ENCODE measurements at regions of chr14 and their contacts with region 1.

Region 1: GRCh38 chr14:100263144-100263543 is 24.2 kb downstream of the YY1 start:
- DNase-seq: no peak
- H3K4me3 Mint-ChIP-seq: no peak overlapping the region
- H3K27ac Mint-ChIP-seq: peak overlapping the region; percentile 51
- H3K4me1 Mint-ChIP-seq: peaks cover 80% of the 10 kb centered on the region
- H3K27me3 Mint-ChIP-seq: no peaks in the 10 kb centered on the region

Region 2: DNA sequence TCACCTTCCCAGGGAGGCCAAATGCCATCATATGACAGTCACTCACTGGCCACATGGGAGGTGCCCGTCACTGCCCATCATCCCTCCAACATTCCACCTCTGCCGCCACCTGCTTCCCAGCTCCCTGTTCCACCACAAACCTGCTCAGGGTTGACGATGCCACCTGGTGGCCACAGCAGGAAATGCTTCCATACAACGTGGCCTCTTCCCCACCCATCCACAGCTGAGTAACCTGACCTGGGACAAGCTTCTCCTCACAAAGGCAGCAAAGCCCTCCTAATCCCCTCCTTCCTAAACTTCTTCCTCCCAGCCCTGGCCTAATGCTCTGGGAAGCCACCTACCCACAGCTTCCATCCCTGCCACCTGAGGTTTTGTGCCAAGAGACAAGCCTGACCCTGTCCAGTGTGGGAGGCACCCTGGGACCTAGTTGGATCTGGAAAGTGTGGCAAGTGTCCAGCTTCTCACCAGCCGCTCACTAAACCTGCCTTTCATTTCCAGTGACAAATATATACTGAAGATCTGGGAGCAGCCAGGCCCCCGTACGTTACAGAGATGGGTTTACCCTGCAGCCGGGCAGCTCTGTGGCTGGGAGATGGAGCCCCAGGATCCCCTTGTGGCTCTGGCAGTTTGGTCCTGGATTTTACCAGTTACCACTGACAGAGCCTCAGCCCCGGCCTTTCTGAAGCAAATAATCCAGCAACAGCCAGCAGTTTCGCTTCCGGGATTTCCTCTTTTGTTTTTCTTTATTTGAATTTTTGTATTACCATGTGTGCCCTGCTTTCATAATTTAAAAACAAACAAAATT is 107.9 kb before region 1 on chr14:
- CTCF ChIA-PET with region 1: no interaction called
- POLR2A ChIA-PET with region 1: no interaction called
- intact Hi-C with region 1: no loop called
- DNase-seq: peak; percentile 64
- H3K4me3 Mint-ChIP-seq: no peak overlapping the region
- H3K27ac Mint-ChIP-seq: peak overlapping the region; percentile 7
- H3K4me1 Mint-ChIP-seq: peaks cover 3% of the 10 kb centered on the region
- H3K27me3 Mint-ChIP-seq: peaks cover 26% of the 10 kb centered on the region

Region 3: GRCh38 chr14:100278702-100279101 is 15.6 kb after region 1 on chr14:
- CTCF ChIA-PET with region 1: interaction called, 46 read pairs
- POLR2A ChIA-PET with region 1: interaction called, 6 read pairs
- intact Hi-C with region 1: loop called (anchors 2 kb)
- DNase-seq: no peak
- H3K4me3 Mint-ChIP-seq: no peak overlapping the region
- H3K27ac Mint-ChIP-seq: peak overlapping the region; percentile 4
- H3K4me1 Mint-ChIP-seq: peaks cover 43% of the 10 kb centered on the region
- H3K27me3 Mint-ChIP-seq: no peaks in the 10 kb centered on the region

Region 4: DNA sequence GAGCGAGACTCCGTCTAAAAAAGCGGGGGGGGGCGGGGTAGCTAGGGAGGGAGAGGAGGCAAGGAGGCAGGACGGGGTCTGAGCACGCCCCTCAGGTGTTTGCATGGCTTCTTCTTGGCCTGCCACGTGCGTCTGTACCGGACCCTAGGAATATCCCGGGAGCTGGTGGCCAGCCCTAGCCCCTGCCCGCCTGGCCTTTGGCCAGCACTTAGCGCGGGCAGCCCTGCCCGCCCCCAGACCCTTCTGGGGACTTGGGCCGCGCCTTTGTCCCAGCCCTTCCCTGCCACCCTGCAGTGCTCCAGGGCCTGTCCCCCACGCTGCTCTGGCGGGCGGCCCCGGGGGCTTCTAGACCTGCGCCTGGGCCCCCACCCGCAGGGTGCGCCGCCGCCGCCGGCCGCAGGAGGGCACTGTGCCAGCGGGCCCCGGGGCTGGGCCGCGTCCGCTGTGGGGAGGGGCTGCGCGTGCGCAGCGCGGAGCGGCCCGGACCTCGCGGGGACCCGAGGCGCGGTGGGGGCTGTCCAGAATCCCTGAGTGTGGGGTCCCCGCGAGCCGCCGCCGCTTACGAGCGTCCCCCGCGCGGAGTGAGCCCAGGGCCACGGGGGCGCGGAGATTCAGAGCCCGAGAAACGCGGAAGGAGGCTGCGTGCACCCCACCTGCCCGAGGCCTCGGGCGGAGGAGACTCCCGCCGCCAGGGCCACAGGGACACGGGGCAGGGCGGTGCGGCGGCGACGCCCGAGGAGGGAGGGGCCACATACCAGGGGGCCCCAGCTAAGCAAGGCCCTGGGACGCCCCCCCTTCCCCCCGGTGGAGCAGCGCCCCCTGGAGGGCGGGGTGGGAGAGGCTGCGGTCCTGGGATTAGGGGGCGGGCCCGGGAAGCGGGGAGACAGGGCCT is 22.1 kb after region 1 on chr14:
- CTCF ChIA-PET with region 1: interaction called, 46 read pairs
- POLR2A ChIA-PET with region 1: interaction called, 3 read pairs
- intact Hi-C with region 1: no loop called
- DNase-seq: peak; percentile 83
- H3K4me3 Mint-ChIP-seq: peak overlapping the region; percentile 69
- H3K27ac Mint-ChIP-seq: no peak overlapping the region
- H3K4me1 Mint-ChIP-seq: peaks cover 6% of the 10 kb centered on the region
- H3K27me3 Mint-ChIP-seq: no peaks in the 10 kb centered on the region